ENCODE measurements at regions of chr7 and their contacts with region 1.

Region 1: DNA sequence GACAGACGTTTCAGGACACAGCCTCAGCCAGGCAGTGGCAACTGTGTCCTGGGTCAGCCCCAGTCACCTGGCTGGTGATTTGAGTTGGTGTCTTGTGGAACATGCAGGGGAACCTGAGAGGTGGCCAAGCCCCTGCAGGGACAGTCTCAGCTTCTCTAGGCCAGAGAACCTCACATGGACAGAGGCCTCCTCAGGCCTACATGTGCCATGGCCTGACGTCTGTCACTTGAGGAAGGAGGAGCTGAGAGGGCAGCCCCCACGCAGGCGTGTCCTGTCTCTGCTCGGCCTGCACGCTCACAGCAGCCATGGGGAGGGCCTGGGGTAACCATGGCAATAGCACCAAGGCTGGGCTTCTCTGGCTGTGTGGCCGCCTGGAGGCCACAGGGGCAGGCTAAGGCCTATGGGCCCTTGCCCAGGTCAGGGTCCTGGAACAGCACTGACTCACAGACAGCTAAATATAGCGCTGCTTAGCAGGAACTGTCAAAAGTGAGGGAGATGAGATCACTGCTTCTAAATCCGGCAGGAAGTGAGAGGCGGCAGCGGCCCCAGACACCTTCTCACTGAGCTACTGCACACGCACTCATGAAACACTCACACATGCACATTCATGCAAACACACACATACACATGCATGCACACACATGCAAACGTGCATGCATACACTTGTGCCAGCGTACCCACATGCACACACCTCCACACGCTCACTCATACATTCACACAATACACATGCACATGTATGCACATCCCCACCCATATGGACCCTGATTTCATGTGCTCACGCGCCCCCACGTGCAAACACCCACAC is 57.0 kb downstream of the YKT6 start:
- DNase-seq: peak; percentile 26
- H3K4me3 ChIP-seq: no peak overlapping the region
- H3K27me3 ChIP-seq: peaks cover 1% of the 10 kb centered on the region; the same call in 1 of the 2 replicates
- CTCF ChIP-seq: no peak

Region 2: DNA sequence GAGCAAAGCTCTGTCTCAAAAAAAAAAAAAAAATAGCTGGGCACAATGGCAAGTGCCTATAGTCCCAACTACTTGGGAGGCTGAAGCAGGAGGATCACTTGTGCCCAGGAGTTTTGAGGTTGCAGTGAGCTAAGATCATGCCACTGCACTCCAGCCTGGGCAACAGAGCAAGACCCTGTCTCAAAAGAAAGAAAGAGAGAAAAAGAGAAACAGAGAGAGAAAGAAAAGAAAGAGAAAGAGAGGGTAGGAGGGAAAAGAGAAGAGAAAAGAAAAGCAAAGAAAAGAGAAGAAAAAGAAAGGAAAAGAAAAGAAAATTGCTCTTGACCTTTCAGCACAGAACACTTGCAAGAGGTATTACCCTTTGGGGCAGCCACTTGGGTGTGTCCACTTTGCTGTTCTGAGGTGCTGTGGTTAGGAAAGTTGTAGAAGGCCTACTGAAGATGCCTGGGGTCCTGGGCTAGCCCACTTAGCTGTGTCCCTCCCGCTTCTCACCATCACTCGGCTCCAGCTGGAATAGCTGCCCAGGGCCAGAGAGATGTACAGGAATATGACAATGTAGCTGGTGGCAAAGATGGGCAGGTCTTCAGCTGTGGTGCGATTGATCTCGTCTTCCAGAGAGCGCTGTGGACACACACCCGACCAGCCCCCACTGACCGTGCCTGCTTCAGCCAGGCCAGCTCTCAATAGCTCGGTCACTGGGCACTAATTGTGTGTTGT is 277.7 kb after region 1 on chr7:
- CTCF ChIA-PET with region 1: no interaction called
- POLR2A ChIA-PET with region 1: interaction called, 10 read pairs
- DNase-seq: no peak
- H3K4me3 ChIP-seq: no peak overlapping the region
- H3K27me3 ChIP-seq: no peaks in the 10 kb centered on the region; the same call in 1 of the 2 replicates
- CTCF ChIP-seq: no peak

Measured in BJ (cell line).